ENCODE measurements at regions of chrX and their contacts with region 1.

Region 1: GRCh38 chrX:20252381-20253231 is 14.1 kb downstream of the RPS6KA3 start:
- DNase-seq: peak; percentile 61
- H3K4me3 ChIP-seq: no peak overlapping the region
- H3K27ac ChIP-seq: no peak overlapping the region
- H3K4me1 ChIP-seq: no peaks in the 10 kb centered on the region
- H3K27me3 ChIP-seq: no peaks in the 10 kb centered on the region
- CTCF ChIP-seq: peak; percentile 55 to 67
- POLR2A ChIP-seq: no peak

Region 2: GRCh38 chrX:20217275-20217674 is 35.3 kb before region 1 on chrX:
- CTCF ChIA-PET with region 1: interaction called, 14 read pairs
- POLR2A ChIA-PET with region 1: no interaction called
- dilution Hi-C with region 1: no loop called
- intact Hi-C with region 1: no loop called
- DNase-seq: peak; percentile 82
- H3K4me3 ChIP-seq: peak overlapping the region in 2 of 3 experiments; percentile 37 to 95
- H3K27ac ChIP-seq: peak overlapping the region; percentile 78
- H3K4me1 ChIP-seq: peaks cover 24% of the 10 kb centered on the region
- H3K27me3 ChIP-seq: no peaks in the 10 kb centered on the region
- CTCF ChIP-seq: no peak
- POLR2A ChIP-seq: no peak

Region 3: DNA sequence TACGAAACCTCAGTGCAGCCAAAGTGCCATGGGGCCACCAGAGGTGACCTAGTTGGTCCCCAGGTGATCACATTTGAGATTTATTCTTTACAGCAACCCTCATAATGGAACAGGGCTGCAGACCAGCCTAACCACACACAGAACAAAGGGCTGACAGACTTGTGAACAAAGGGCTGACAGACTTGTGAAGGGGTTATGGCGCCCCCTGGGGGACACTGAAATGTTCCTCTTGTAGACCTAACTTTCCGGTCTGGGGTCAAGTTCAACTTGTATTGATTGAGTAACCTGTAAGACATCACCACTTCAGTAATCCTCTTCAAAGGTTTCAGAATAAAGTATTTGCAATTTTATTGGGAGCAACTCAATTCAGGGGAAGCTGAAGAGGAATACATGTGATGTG is 190.0 kb after region 1 on chrX:
- CTCF ChIA-PET with region 1: interaction called, 7 read pairs
- POLR2A ChIA-PET with region 1: no interaction called
- dilution Hi-C with region 1: no loop called
- intact Hi-C with region 1: loop called (anchors 1 kb)
- DNase-seq: peak; percentile 54
- H3K4me3 ChIP-seq: no peak overlapping the region
- H3K27ac ChIP-seq: no peak overlapping the region
- H3K4me1 ChIP-seq: no peaks in the 10 kb centered on the region
- H3K27me3 ChIP-seq: no peaks in the 10 kb centered on the region
- CTCF ChIP-seq: peak; percentile 43 to 49
- POLR2A ChIP-seq: no peak

Measured in endothelial cell of umbilical vein (primary cell).